Tibial artery (tissue), 4 donors: ENCODE measurements at regions of chr12 and their contacts with region 1.

Region 1: DNA sequence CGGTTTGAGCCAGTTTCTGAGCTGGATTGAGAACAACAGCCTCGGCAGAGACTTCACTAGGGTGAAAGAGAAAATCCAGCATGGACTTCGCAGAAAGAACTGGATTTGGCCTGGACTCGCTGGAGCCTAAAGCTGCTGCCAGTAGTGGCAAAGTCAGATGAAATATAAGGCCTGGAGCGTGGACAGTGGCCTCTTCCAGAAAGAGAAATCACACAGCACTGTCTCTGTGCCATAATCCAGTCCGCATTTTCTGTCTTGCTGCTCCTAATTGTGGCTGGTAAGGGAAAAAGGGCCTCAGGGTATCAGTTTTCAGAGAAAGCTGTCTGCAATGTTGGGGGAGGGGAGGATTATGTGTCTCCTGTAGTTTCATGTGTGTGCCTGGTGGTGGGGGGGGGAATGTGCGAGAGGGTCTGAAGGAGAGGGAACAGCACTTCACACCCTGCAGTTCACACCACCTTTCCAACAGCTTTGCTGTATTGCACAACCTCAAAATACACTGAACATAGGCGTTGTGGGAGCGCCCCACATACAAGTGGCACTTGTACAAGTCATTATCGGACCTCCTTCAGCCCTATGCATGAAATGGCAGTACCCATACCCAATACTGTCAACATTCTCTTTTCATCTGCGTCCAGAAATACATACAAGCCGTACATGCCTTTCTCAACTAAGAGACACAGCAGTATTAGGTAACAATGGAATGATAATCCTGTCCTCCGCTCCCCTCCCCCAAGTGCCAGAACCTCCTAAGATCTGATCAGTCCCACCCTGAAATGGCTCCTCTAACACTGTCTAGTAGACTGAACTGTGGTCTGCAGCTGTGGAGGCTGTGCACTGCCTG is 107.5 kb upstream of the ATF7IP start:
- DNase-seq: peak; percentile 98
- H3K4me3 ChIP-seq: peak overlapping the region; percentile 22 to 34
- H3K27ac ChIP-seq: peak overlapping the region; percentile 79 to 84
- H3K4me1 ChIP-seq: peaks cover 0 to 60% (median 34%) of the 10 kb centered on the region in 4 donors
- H3K27me3 ChIP-seq: no peaks in the 10 kb centered on the region
- CTCF ChIP-seq: no peak

Region 2: DNA sequence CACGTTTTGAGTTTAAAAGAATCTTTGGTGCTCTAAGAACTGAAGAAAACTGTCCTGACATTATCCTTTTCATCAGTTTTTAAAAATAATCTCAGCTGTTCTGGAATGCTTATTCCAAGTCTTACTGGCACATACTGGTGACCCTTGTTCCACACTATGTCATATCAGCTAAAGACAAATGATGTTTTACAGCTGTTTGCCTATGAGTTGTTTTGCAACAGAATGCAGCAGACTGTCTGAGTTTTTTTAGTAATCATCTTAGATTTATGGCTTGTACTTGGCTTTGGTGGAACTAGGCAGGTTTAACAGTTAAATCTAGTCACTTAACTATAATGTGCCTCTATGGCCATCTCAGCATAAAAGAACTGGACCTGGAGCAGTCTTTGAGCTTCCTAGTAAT is 185.0 kb before region 1 on chr12:
- intact Hi-C with region 1: no loop called
- DNase-seq: no peak
- H3K4me3 ChIP-seq: no peak overlapping the region
- H3K27ac ChIP-seq: no peak overlapping the region
- H3K4me1 ChIP-seq: no peaks in the 10 kb centered on the region
- H3K27me3 ChIP-seq: no peaks in the 10 kb centered on the region
- CTCF ChIP-seq: no peak

Region 3: GRCh38 chr12:14384783-14385638 is 127.1 kb after region 1 on chr12:
- intact Hi-C with region 1: loop called (anchors 10 kb)
- DNase-seq: peak; percentile 47 to 68
- H3K4me3 ChIP-seq: peak overlapping the region; percentile 22 to 38
- H3K27ac ChIP-seq: peak overlapping the region; percentile 59 to 73
- H3K4me1 ChIP-seq: peaks cover 0 to 48% (median 7%) of the 10 kb centered on the region in 4 donors
- H3K27me3 ChIP-seq: no peaks in the 10 kb centered on the region
- CTCF ChIP-seq: no peak